Naive thymus-derived CD4-positive, alpha-beta T cell (primary cell): ENCODE measurements at regions of chr22 and their contacts with region 1.

Region 1: DNA sequence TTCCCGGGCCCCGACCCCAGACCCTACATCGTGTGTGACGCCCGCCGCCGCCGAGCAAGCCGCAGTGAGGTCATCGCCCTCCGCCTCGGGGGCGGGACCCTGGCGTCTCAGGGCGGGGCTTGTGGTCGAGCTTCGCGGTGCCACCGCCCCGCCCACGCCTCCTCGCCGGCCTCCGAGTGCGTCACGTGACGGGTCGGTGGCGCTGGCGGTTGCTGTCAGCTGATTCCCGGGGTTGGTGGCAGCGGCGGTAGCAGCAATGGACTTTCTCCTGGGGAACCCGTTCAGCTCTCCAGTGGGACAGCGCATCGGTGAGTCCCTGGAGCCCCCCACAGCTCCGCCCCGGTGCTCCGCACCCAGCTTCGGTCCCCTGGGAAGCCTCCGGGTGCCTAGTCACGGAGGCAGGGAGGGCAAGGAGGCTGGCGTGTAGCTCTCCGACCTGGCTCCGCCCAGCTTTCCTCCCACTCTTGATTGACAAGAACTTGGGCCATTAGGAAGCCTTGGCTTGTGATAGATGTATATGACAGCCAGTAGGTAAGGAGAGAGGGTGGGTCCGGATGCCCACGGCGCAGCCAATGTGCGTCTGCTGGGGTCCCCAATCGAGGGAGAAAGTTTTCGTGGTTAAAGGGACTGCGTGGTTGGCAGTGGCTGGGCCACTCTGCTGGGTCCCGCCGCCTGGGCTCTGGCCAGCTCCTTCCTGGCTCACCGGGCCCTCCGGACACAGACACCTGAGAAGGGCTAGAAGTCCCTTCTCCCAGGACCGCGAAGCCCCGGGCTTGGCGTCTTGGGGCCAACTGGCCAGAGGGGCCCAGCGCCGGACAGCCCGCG is at the start of gene TOM1:
- DNase-seq: peak; percentile 96 to 100 (median 98)
- ATAC-seq: peak; percentile 91
- H3K4me3 ChIP-seq: peak within 1 kb of the TSS; percentile 77
- H3K4me3 Mint-ChIP-seq: peak within 1 kb of the TSS; percentile 89 to 99 (median 94)
- H3K27ac ChIP-seq: peak within 1 kb of the TSS; percentile 95
- H3K27ac Mint-ChIP-seq: peak within 1 kb of the TSS; percentile 94 to 100 (median 98)
- H3K4me1 ChIP-seq: peaks cover 10% of the 10 kb centered on the region in 2 donors
- H3K4me1 Mint-ChIP-seq: peaks cover 13 to 50% (median 38%) of the 10 kb centered on the region in 7 donors
- H3K27me3 ChIP-seq: no peaks in the 10 kb centered on the region
- H3K27me3 Mint-ChIP-seq: no peaks in the 10 kb centered on the region
- total RNA-seq, gene TOM1: 36.5 to 225 (median 62.1) TPM

Region 2: GRCh38 chr22:34950489-34950888 is 349.4 kb before region 1 on chr22:
- CTCF ChIA-PET with region 1: no interaction called
- POLR2A ChIA-PET with region 1: no interaction called
- intact Hi-C with region 1: no loop called
- DNase-seq: no peak
- ATAC-seq: no peak
- H3K4me3 ChIP-seq: no peak overlapping the region
- H3K4me3 Mint-ChIP-seq: no peak overlapping the region
- H3K27ac ChIP-seq: no peak overlapping the region
- H3K27ac Mint-ChIP-seq: no peak overlapping the region
- H3K4me1 ChIP-seq: no peaks in the 10 kb centered on the region
- H3K4me1 Mint-ChIP-seq: no peaks in the 10 kb centered on the region
- H3K27me3 ChIP-seq: no peaks in the 10 kb centered on the region
- H3K27me3 Mint-ChIP-seq: peaks cover 0 to 8% (median 0%) of the 10 kb centered on the region in 5 donors

Region 3: GRCh38 chr22:35257321-35258190 is 42.3 kb before region 1 on chr22 and contains the start of gene HMGXB4:
- CTCF ChIA-PET with region 1: interaction called, 4 read pairs
- POLR2A ChIA-PET with region 1: interaction called, 28 read pairs
- intact Hi-C with region 1: loop called (anchors 1 kb)
- DNase-seq: peak; percentile 80 to 91 (median 87)
- ATAC-seq: peak; percentile 96
- H3K4me3 ChIP-seq: peak within 1 kb of the TSS; percentile 40
- H3K4me3 Mint-ChIP-seq: peak within 1 kb of the TSS; percentile 88 to 94 (median 93)
- H3K27ac ChIP-seq: peak within 1 kb of the TSS; percentile 98
- H3K27ac Mint-ChIP-seq: peak within 1 kb of the TSS; percentile 85 to 97 (median 95)
- H3K4me1 ChIP-seq: peaks cover 8 to 9% of the 10 kb centered on the region in 2 donors
- H3K4me1 Mint-ChIP-seq: peaks cover 15 to 42% (median 32%) of the 10 kb centered on the region in 7 donors
- H3K27me3 ChIP-seq: no peaks in the 10 kb centered on the region
- H3K27me3 Mint-ChIP-seq: peaks cover 0 to 5% (median 0%) of the 10 kb centered on the region in 5 donors
- total RNA-seq, gene HMGXB4: 23.3 to 39.1 (median 32.2) TPM

Region 4: DNA sequence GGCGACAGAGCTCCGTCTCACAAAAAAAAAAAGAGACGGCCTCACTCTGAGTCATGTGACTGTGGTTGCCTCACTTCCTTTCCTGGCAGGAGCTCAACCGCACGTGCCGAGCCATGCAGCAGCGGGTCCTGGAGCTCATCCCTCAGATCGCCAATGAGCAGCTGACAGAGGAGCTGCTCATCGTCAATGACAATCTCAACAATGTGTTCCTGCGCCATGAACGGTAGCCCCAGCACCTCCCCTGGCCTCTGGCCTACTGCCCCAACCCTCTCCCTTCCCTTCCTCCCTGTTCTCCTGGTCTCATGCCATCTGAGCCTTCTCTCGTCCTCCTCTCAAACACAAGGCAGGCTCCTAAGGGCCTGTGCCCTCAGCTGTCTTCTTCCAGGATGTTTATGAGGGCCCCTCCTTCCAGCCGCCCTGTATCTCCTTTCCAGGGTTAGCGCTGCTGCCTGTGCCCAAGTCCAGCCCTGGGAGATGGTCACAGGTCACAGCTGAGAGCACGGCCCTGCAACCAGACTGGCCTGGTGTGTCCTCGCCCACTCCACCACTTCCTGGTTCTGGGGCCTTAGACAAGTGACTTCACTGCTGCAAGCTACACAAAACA is 30.5 kb after region 1 on chr22:
- CTCF ChIA-PET with region 1: interaction called, 3 read pairs
- POLR2A ChIA-PET with region 1: interaction called, 21 read pairs
- intact Hi-C with region 1: loop called (anchors 1 to 2 kb)
- DNase-seq: peak in 8 of 9 donors; percentile 33 to 57 (median 46)
- ATAC-seq: peak; percentile 74
- H3K4me3 ChIP-seq: peak overlapping the region; percentile 13
- H3K4me3 Mint-ChIP-seq: peak overlapping the region; percentile 61 to 80 (median 73)
- H3K27ac ChIP-seq: peak overlapping the region; percentile 34
- H3K27ac Mint-ChIP-seq: peak overlapping the region; percentile 84 to 92 (median 90)
- H3K4me1 ChIP-seq: peaks cover 22 to 23% of the 10 kb centered on the region in 2 donors
- H3K4me1 Mint-ChIP-seq: peaks cover 12 to 38% (median 23%) of the 10 kb centered on the region in 7 donors
- H3K27me3 ChIP-seq: no peaks in the 10 kb centered on the region
- H3K27me3 Mint-ChIP-seq: no peaks in the 10 kb centered on the region

Region 5: GRCh38 chr22:35552196-35552842 is 252.4 kb after region 1 on chr22:
- CTCF ChIA-PET with region 1: no interaction called
- POLR2A ChIA-PET with region 1: no interaction called
- intact Hi-C with region 1: loop called in 1 of 2 experiments (anchors 5 kb)
- DNase-seq: peak; percentile 61 to 86 (median 83)
- ATAC-seq: peak; percentile 99
- H3K4me3 ChIP-seq: peak overlapping the region; percentile 48
- H3K4me3 Mint-ChIP-seq: peak overlapping the region; percentile 35 to 72 (median 56)
- H3K27ac ChIP-seq: no peak overlapping the region
- H3K27ac Mint-ChIP-seq: peak overlapping the region in 7 of 9 donors; percentile 5 to 85 (median 40)
- H3K4me1 ChIP-seq: peaks cover 8 to 15% of the 10 kb centered on the region in 2 donors
- H3K4me1 Mint-ChIP-seq: peaks cover 14 to 21% (median 19%) of the 10 kb centered on the region in 7 donors
- H3K27me3 ChIP-seq: no peaks in the 10 kb centered on the region
- H3K27me3 Mint-ChIP-seq: peaks cover 0 to 8% (median 0%) of the 10 kb centered on the region in 5 donors

Region 6: DNA sequence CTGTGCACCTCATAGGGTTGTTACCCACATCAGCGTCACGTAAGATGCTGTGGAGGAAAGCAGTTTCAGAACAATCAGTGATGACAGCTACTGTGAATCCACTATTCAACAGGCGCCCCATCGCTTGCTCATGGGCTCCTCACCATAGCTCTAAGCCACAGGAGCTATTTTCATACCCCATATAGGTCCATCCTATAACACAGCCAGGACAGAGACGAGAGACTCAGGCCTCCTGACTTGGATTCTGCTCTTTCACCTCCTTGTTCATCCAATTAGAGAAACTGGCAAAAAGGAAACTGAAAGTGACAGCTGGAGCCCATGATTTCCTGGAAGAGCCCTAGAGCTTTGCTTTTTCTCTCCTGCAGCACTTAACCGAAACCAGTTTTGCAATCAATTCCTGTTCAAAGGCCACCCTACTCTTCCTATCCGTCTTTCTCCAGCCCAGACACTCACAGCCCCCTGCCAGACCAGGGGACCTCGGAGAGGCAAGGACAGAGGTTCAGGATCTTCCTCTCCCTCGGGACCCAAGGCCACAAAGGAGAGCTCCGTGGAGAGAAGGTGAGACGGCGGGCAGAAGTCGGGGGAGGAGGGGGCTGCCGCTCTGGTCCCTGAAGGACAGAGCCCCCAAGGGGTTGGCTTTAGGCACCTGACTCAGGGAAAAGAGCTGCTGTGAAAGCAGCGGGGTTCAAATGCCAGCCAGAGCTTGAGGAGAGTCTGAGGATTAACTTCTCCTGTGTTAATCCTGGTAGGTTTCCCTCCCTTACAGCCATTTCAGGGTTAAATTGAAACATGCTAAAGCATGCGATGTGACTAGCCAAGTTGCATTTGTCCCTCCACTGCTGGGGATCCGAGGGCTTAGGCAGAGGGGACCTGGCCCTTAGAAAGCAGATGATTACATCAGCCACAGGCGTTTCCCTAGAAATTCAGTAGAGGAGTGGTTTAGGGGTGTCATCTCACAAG is 348.5 kb after region 1 on chr22 and contains the start of gene APOL6:
- CTCF ChIA-PET with region 1: no interaction called
- POLR2A ChIA-PET with region 1: interaction called, 8 read pairs
- intact Hi-C with region 1: loop called in 1 of 2 experiments (anchors 1 kb)
- DNase-seq: peak; percentile 31 to 81 (median 79)
- ATAC-seq: peak; percentile 80
- H3K4me3 ChIP-seq: peak within 1 kb of the TSS; percentile 93
- H3K4me3 Mint-ChIP-seq: peak within 1 kb of the TSS; percentile 95 to 100 (median 100)
- H3K27ac ChIP-seq: peak within 1 kb of the TSS; percentile 96
- H3K27ac Mint-ChIP-seq: peak within 1 kb of the TSS; percentile 97 to 100 (median 100)
- H3K4me1 ChIP-seq: peaks cover 27% of the 10 kb centered on the region in 2 donors
- H3K4me1 Mint-ChIP-seq: peaks cover 17 to 54% (median 41%) of the 10 kb centered on the region in 7 donors
- H3K27me3 ChIP-seq: no peaks in the 10 kb centered on the region
- H3K27me3 Mint-ChIP-seq: no peaks in the 10 kb centered on the region
- total RNA-seq, gene APOL6: 33.4 to 99.8 (median 38.2) TPM